ENCODE measurements at regions of chr14 and their contacts with region 1.

Region 1: GRCh38 chr14:23120541-23121251 is 1.6 kb upstream of the CEBPE start:
- DNase-seq: peak; percentile 83
- H3K4me3 Mint-ChIP-seq: no peak overlapping the region
- H3K27ac Mint-ChIP-seq: no peak overlapping the region
- H3K4me1 Mint-ChIP-seq: peaks cover 21% of the 10 kb centered on the region
- H3K27me3 Mint-ChIP-seq: no peaks in the 10 kb centered on the region
- CTCF ChIP-seq: peak; percentile 100

Region 2: GRCh38 chr14:23076785-23077408 is 43.8 kb before region 1 on chr14:
- CTCF ChIA-PET with region 1: interaction called, 20 read pairs
- POLR2A ChIA-PET with region 1: no interaction called
- intact Hi-C with region 1: no loop called
- DNase-seq: peak; percentile 48
- H3K4me3 Mint-ChIP-seq: no peak overlapping the region
- H3K27ac Mint-ChIP-seq: no peak overlapping the region
- H3K4me1 Mint-ChIP-seq: peaks cover 30% of the 10 kb centered on the region
- H3K27me3 Mint-ChIP-seq: no peaks in the 10 kb centered on the region
- CTCF ChIP-seq: peak; percentile 55

Region 3: GRCh38 chr14:23141671-23142451 is 21.2 kb after region 1 on chr14:
- CTCF ChIA-PET with region 1: interaction called, 39 read pairs
- POLR2A ChIA-PET with region 1: interaction called, 9 read pairs
- intact Hi-C with region 1: no loop called
- DNase-seq: peak; percentile 83
- H3K4me3 Mint-ChIP-seq: no peak overlapping the region
- H3K27ac Mint-ChIP-seq: peak overlapping the region; percentile 83
- H3K4me1 Mint-ChIP-seq: peaks cover 59% of the 10 kb centered on the region
- H3K27me3 Mint-ChIP-seq: no peaks in the 10 kb centered on the region
- CTCF ChIP-seq: no peak

Region 4: GRCh38 chr14:23160924-23161538 is 40.3 kb after region 1 on chr14:
- CTCF ChIA-PET with region 1: interaction called, 35 read pairs
- POLR2A ChIA-PET with region 1: interaction called, 6 read pairs
- intact Hi-C with region 1: no loop called
- DNase-seq: peak; percentile 82
- H3K4me3 Mint-ChIP-seq: peak overlapping the region; percentile 37
- H3K27ac Mint-ChIP-seq: no peak overlapping the region
- H3K4me1 Mint-ChIP-seq: peaks cover 19% of the 10 kb centered on the region
- H3K27me3 Mint-ChIP-seq: no peaks in the 10 kb centered on the region
- CTCF ChIP-seq: no peak

Region 5: GRCh38 chr14:23195550-23196101 is 74.9 kb after region 1 on chr14:
- CTCF ChIA-PET with region 1: interaction called, 766 read pairs
- POLR2A ChIA-PET with region 1: interaction called, 78 read pairs
- intact Hi-C with region 1: no loop called
- DNase-seq: no peak
- H3K4me3 Mint-ChIP-seq: no peak overlapping the region
- H3K27ac Mint-ChIP-seq: no peak overlapping the region
- H3K4me1 Mint-ChIP-seq: peaks cover 22% of the 10 kb centered on the region
- H3K27me3 Mint-ChIP-seq: no peaks in the 10 kb centered on the region
- CTCF ChIP-seq: no peak

Region 6: GRCh38 chr14:23301288-23301968 is 180.7 kb after region 1 on chr14:
- CTCF ChIA-PET with region 1: interaction called, 10 read pairs
- POLR2A ChIA-PET with region 1: interaction called, 6 read pairs
- intact Hi-C with region 1: loop called (anchors 1 kb)
- DNase-seq: peak; percentile 97
- H3K4me3 Mint-ChIP-seq: peak overlapping the region; percentile 95
- H3K27ac Mint-ChIP-seq: peak overlapping the region; percentile 97
- H3K4me1 Mint-ChIP-seq: peaks cover 25% of the 10 kb centered on the region
- H3K27me3 Mint-ChIP-seq: no peaks in the 10 kb centered on the region
- CTCF ChIP-seq: peak; percentile 79